Heart left ventricle (tissue), 16 donors: ENCODE measurements at regions of chr22 and their contacts with region 1.

Region 1: DNA sequence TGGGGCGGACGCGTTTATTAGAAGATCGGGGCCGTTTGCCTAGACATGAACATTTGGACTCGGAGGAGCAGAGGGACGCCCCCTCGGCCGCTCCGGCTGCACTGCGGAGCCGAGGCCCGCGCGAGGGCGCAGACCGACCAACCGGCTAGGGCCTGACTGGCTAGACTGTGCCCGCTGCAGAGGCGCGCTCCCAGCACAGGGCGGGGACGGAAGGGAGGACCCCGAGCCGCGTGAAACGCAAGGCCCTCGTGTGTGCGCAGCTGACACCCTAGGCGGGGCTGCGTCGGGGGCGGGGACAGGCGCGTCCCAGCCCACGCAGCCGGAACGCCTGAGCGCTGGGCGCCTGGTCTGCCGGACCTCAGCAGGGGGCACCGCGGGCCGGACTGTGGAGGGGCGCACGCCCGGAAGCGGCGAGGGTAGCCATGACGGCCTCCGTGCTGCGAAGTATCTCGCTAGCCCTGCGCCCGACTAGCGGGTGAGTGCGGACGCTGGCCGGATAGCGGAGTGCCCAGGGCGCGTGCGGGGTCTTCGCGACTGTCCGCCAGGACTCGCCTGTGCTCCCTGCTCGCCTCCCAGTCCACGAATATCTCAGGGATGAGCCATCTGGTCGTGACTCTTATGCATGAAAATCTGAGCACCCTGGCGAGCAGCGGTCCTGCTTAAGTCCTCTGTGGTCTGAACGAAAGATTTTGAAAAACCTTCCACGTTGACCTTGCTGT is at the start of gene MRPL40:
- DNase-seq: peak; percentile 95 to 98 (median 97)
- ATAC-seq: peak; percentile 95 to 98 (median 98)
- H3K4me3 ChIP-seq: peak within 1 kb of the TSS; percentile 62 to 95 (median 86)
- H3K27ac ChIP-seq: peak within 1 kb of the TSS; percentile 93 to 99 (median 98)
- H3K4me1 ChIP-seq: peaks cover 7 to 46% (median 29%) of the 10 kb centered on the region in 12 donors
- H3K27me3 ChIP-seq: no peaks in the 10 kb centered on the region
- CTCF ChIP-seq: peak in 4 of 12 donors; percentile 15 to 28 (median 21)
- POLR2A ChIP-seq: peak in 1 of 2 donors; percentile 86
- total RNA-seq, gene MRPL40: 39.9 to 62.7 (median 54.2) TPM

Region 2: GRCh38 chr22:19291580-19292457 is 140.5 kb before region 1 on chr22 and contains the start of gene CLTCL1:
- intact Hi-C with region 1: loop called in 1 of 10 experiments (anchors 10 kb)
- DNase-seq: peak; percentile 86 to 93 (median 89)
- ATAC-seq: peak; percentile 65 to 94 (median 88)
- H3K4me3 ChIP-seq: peak within 1 kb of the TSS; percentile 62 to 100 (median 92)
- H3K27ac ChIP-seq: peak within 1 kb of the TSS; percentile 64 to 93 (median 82)
- H3K4me1 ChIP-seq: peaks cover 0 to 49% (median 24%) of the 10 kb centered on the region in 12 donors
- H3K27me3 ChIP-seq: no peaks in the 10 kb centered on the region
- CTCF ChIP-seq: no peak
- POLR2A ChIP-seq: peak in 1 of 2 donors; percentile 70
- total RNA-seq, gene CLTCL1: 7.6 to 20.9 (median 10.4) TPM

Region 3: GRCh38 chr22:19447388-19448075 is 15.2 kb after region 1 on chr22 and contains the start of gene C22orf39:
- intact Hi-C with region 1: loop called in 2 of 10 experiments (anchors 1 kb)
- DNase-seq: peak; percentile 91 to 92 (median 92)
- ATAC-seq: peak; percentile 84 to 97 (median 94)
- H3K4me3 ChIP-seq: peak within 1 kb of the TSS; percentile 73 to 99 (median 91)
- H3K27ac ChIP-seq: peak within 1 kb of the TSS; percentile 76 to 97 (median 91)
- H3K4me1 ChIP-seq: peaks cover 2 to 54% (median 33%) of the 10 kb centered on the region in 12 donors
- H3K27me3 ChIP-seq: no peaks in the 10 kb centered on the region
- CTCF ChIP-seq: peak in 1 of 12 donors; percentile 7
- POLR2A ChIP-seq: peak in 1 of 2 donors; percentile 88
- total RNA-seq, gene C22orf39: 39.1 to 115 (median 64.5) TPM